ENCODE measurements at regions of chr7 and their contacts with region 1.

Region 1: GRCh38 chr7:15503603-15504290 is 58.1 kb downstream of the AGMO start:
- DNase-seq: peak; percentile 76
- H3K4me3 ChIP-seq: no peak overlapping the region
- H3K27ac ChIP-seq: peak overlapping the region; percentile 71
- H3K4me1 ChIP-seq: peaks cover 54% of the 10 kb centered on the region
- H3K27me3 ChIP-seq: no peaks in the 10 kb centered on the region
- CTCF ChIP-seq: no peak
- POLR2A ChIP-seq: no peak

Region 2: GRCh38 chr7:15130666-15131541 is 372.8 kb before region 1 on chr7:
- CTCF ChIA-PET with region 1: no interaction called
- POLR2A ChIA-PET with region 1: no interaction called
- dilution Hi-C with region 1: no loop called
- intact Hi-C with region 1: loop called (anchors 10 kb)
- DNase-seq: peak; percentile 86
- H3K4me3 ChIP-seq: peak overlapping the region in 1 of 3 experiments; percentile 37
- H3K27ac ChIP-seq: peak overlapping the region; percentile 98
- H3K4me1 ChIP-seq: peaks cover 38% of the 10 kb centered on the region
- H3K27me3 ChIP-seq: no peaks in the 10 kb centered on the region
- CTCF ChIP-seq: no peak
- POLR2A ChIP-seq: no peak

Region 3: GRCh38 chr7:15326044-15326644 is 177.6 kb before region 1 on chr7:
- CTCF ChIA-PET with region 1: no interaction called
- POLR2A ChIA-PET with region 1: no interaction called
- dilution Hi-C with region 1: no loop called
- intact Hi-C with region 1: loop called (anchors 5 kb)
- DNase-seq: peak; percentile 72
- H3K4me3 ChIP-seq: no peak overlapping the region
- H3K27ac ChIP-seq: no peak overlapping the region
- H3K4me1 ChIP-seq: no peaks in the 10 kb centered on the region
- H3K27me3 ChIP-seq: no peaks in the 10 kb centered on the region
- CTCF ChIP-seq: peak; percentile 33 to 45
- POLR2A ChIP-seq: no peak

Region 4: DNA sequence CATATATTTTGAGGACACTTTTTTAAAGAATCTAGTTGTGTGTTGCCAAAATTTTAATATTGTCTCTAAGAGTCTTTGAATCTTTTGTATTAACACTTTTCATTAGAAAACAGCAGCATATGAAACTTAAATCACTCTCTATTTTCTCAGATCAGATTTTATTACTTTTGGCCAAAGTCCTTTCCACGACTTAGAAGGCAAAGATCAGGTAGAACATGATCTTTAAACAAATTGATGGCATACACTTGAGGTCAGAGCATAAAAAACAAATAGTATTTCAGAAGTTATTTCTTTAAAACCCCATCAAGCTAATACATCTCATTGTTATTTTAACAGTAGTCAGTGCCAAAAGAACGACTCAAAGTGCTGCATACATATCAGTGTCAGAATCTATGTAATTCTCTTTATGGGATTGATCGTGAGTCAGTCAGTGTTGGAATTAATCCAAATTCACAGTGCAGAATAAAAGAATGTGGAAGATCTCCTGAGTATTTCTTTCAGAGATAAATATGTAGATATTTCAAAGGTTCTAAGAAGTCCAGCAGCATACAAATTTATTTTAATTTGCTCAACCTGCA is 67.6 kb after region 1 on chr7:
- CTCF ChIA-PET with region 1: no interaction called
- POLR2A ChIA-PET with region 1: no interaction called
- dilution Hi-C with region 1: no loop called
- intact Hi-C with region 1: loop called (anchors 1 kb)
- DNase-seq: peak; percentile 82
- H3K4me3 ChIP-seq: no peak overlapping the region
- H3K27ac ChIP-seq: no peak overlapping the region
- H3K4me1 ChIP-seq: peaks cover 9% of the 10 kb centered on the region
- H3K27me3 ChIP-seq: no peaks in the 10 kb centered on the region
- CTCF ChIP-seq: no peak
- POLR2A ChIP-seq: no peak

Region 5: GRCh38 chr7:15764851-15765382 is 261.2 kb after region 1 on chr7:
- CTCF ChIA-PET with region 1: no interaction called
- POLR2A ChIA-PET with region 1: no interaction called
- dilution Hi-C with region 1: no loop called
- intact Hi-C with region 1: loop called (anchors 1 kb)
- DNase-seq: peak; percentile 72
- H3K4me3 ChIP-seq: no peak overlapping the region
- H3K27ac ChIP-seq: no peak overlapping the region
- H3K4me1 ChIP-seq: peaks cover 4% of the 10 kb centered on the region
- H3K27me3 ChIP-seq: no peaks in the 10 kb centered on the region
- CTCF ChIP-seq: no peak
- POLR2A ChIP-seq: no peak

Region 6: GRCh38 chr7:16071246-16071857 is 567.6 kb after region 1 on chr7:
- CTCF ChIA-PET with region 1: no interaction called
- POLR2A ChIA-PET with region 1: no interaction called
- dilution Hi-C with region 1: no loop called
- intact Hi-C with region 1: loop called (anchors 1 kb)
- DNase-seq: peak; percentile 70
- H3K4me3 ChIP-seq: no peak overlapping the region
- H3K27ac ChIP-seq: no peak overlapping the region
- H3K4me1 ChIP-seq: peaks cover 12% of the 10 kb centered on the region
- H3K27me3 ChIP-seq: no peaks in the 10 kb centered on the region
- CTCF ChIP-seq: peak; percentile 41 to 57
- POLR2A ChIP-seq: no peak

Measured in endothelial cell of umbilical vein (primary cell).